HepG2 (cell line): ENCODE measurements at regions of chrX and their contacts with region 1.

Region 1: DNA sequence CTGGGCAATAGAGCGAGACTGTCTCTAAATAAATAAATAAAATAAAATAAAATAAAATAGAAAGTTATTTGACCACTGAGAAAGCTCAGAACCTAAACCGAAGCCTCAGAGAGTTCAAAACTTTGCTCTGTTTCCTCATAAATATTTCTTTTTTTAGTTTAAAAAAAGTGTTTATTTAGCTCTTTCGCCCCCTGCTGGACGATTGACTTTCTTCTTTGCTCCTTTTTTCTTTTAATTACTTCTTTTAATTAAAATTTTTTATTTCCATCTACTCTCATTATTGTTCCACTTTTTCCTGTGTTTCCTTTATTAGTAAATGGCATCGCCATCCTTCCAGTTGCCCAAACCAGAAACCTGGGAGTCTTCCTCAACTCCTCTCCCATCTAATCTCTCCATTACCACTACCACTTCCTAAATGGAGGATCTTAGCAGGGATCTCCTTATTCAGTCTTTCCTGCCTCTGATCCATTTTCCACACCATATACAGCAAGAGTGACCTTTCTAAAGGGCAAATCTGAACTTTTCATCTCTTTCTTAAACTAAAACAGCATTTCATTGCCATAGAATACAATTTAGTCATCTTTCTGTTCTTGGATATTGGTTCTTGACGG is 726 bp upstream of the IL13RA2 start:
- DNase-seq: no peak
- ATAC-seq: no peak
- H3K4me3 ChIP-seq: no peak overlapping the region
- H3K27ac ChIP-seq: no peak overlapping the region
- H3K4me1 ChIP-seq: no peaks in the 10 kb centered on the region
- H3K27me3 ChIP-seq: no peaks in the 10 kb centered on the region
- CTCF ChIP-seq: no peak
- EP300 ChIP-seq: no peak
- POLR2A ChIP-seq: no peak
- RAD21 ChIP-seq: no peak

Region 2: GRCh38 chrX:115494161-115494560 is 476.0 kb after region 1 on chrX:
- CTCF ChIA-PET with region 1: no interaction called
- POLR2A ChIA-PET with region 1: no interaction called
- in situ Hi-C with region 1: no loop called
- intact Hi-C with region 1: loop called (anchors 5 kb)
- DNase-seq: peak; percentile 7
- ATAC-seq: peak; percentile 44; the same call in 1 of the 3 replicates
- H3K4me3 ChIP-seq: no peak overlapping the region
- H3K27ac ChIP-seq: no peak overlapping the region
- H3K4me1 ChIP-seq: no peaks in the 10 kb centered on the region
- H3K27me3 ChIP-seq: no peaks in the 10 kb centered on the region
- CTCF ChIP-seq: no peak
- EP300 ChIP-seq: no peak
- POLR2A ChIP-seq: no peak
- RAD21 ChIP-seq: no peak

Region 3: DNA sequence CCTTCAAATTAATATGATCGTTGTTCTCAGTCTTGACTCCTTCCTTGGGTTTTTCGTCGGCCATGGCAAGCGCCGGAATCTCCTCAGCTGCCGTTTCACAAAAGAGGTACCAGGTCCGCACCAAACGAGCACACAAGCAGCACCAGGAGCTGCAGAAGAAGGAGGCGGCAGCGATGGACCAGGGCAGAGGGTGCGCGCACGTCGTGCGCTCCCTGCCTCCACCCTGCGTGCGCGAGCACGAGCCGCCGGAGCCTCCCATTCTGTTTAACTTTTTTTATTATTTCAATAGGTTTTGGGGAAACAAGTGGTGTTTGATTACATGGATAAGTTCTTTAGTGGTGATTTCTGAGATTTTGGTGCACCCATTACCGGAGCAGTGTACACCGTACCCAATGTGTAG is 701.0 kb after region 1 on chrX:
- CTCF ChIA-PET with region 1: no interaction called
- POLR2A ChIA-PET with region 1: no interaction called
- in situ Hi-C with region 1: no loop called
- intact Hi-C with region 1: no loop called
- DNase-seq: no peak
- ATAC-seq: no peak
- H3K4me3 ChIP-seq: no peak overlapping the region
- H3K27ac ChIP-seq: no peak overlapping the region
- H3K4me1 ChIP-seq: no peaks in the 10 kb centered on the region
- H3K27me3 ChIP-seq: no peaks in the 10 kb centered on the region
- CTCF ChIP-seq: no peak
- EP300 ChIP-seq: no peak
- POLR2A ChIP-seq: no peak
- RAD21 ChIP-seq: no peak